ENCODE measurements at regions of chr15 and their contacts with region 1.

Region 1: GRCh38 chr15:93087825-93088199 is 1.2 kb downstream of the RGMA start:
- DNase-seq: no peak
- ATAC-seq: peak; percentile 64

Region 2: DNA sequence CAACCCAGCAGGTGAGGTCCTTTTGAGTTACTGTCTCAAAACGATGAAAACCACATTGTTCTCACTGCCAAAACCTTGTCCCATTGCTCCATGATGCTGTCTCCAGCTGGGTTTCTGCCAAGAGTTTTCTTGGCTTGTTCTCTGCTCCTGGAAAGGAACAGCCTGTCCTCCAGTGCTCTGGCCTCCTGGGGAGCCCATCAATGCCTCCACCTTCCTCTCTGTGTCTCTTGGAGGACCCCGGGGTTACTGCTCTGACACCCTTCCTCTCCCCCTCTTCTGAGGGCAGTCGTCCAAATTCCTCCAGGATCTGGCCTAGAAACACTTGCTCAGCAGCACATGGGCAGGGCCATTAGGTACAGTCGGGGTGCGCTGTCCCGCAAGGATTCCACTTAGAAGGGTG is 65.1 kb after region 1 on chr15:
- intact Hi-C with region 1: loop called (anchors 2 kb)
- DNase-seq: peak; percentile 85
- ATAC-seq: peak; percentile 96

Region 3: GRCh38 chr15:93250950-93251349 is 163.1 kb after region 1 on chr15:
- intact Hi-C with region 1: loop called (anchors 1 kb)
- DNase-seq: no peak
- ATAC-seq: peak; percentile 64

Region 4: DNA sequence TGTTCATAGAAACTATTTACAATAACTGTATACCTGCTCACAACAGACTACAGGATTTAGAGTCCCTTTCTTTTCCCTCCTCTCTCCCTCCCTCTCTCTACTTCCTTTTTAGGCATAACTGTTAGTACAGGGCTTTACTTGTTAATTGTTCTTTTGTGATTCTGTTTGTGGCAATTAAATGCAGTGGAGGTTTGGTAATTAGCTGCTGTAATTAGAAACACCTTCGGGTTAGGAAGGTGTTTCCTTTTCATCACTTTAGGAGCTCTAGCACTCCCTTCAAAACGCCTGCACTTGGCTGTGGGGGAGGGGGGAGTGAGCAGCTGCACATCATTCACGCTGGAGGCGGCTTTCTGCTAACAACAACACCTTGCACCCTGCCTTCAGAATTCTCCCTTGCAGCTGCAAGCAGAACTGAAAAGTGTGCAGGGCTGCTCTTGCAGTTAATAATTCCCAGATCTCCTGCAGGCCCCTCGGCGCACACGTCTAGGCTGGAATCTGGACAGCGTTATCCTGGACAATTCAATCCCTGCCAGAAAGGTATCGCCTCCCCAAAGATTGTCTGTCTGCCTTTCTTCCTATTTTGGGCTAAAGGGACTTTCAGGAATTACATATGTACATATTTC is 243.8 kb after region 1 on chr15:
- intact Hi-C with region 1: loop called (anchors 5 kb)
- DNase-seq: no peak
- ATAC-seq: no peak

Region 5: DNA sequence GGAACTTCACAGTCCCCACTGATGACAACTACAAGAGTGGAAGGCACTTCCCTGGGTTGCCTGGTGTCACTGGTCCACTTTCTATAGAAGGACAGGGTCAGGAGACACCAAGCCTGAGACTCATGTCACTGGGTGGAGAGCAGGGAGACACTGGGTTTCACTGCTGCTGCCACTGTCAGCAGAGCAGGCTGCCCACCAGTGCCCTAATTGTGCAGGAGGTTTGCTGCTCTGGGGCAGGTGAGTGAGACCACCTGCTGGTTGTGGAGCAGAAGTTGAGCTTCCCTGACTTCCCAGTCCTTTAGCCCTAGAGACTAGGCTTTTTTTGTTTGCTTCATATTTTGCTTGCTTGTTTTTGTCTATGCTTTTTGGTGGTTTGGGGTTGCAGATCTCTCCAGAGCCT is 529.6 kb after region 1 on chr15:
- intact Hi-C with region 1: loop called (anchors 2 kb)
- DNase-seq: no peak
- ATAC-seq: peak; percentile 17

Region 6: GRCh38 chr15:93771196-93772030 is 683.6 kb after region 1 on chr15:
- intact Hi-C with region 1: no loop called
- DNase-seq: no peak
- ATAC-seq: no peak

Measured in Right ventricle myocardium inferior (tissue), 1 donor.